ENCODE measurements at regions of chr2 and their contacts with region 1.

Region 1: DNA sequence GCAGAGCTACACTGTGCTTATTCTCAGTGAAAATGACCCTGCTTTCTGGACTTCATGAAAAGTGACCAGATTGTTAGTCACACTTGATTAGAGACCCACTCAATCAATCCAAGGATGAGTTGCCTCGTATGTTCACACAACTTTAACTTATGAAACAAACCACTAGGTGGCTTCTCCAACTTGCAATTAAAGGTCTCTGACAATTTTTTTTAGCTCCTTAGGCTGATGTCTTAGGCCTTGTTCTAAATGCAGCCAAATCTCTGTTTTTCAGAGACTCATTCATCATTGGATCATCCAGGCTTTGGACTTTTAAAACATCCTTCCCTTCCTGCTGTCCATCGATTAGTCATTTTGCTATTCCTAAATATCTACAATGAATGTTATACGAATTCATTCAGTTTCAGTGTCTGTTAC is 63.4 kb downstream of the MREG start:
- DNase-seq: no peak
- H3K4me3 Mint-ChIP-seq: no peak overlapping the region
- H3K27ac Mint-ChIP-seq: no peak overlapping the region
- H3K4me1 Mint-ChIP-seq: no peaks in the 10 kb centered on the region
- H3K27me3 Mint-ChIP-seq: peaks cover 2% of the 10 kb centered on the region

Region 2: DNA sequence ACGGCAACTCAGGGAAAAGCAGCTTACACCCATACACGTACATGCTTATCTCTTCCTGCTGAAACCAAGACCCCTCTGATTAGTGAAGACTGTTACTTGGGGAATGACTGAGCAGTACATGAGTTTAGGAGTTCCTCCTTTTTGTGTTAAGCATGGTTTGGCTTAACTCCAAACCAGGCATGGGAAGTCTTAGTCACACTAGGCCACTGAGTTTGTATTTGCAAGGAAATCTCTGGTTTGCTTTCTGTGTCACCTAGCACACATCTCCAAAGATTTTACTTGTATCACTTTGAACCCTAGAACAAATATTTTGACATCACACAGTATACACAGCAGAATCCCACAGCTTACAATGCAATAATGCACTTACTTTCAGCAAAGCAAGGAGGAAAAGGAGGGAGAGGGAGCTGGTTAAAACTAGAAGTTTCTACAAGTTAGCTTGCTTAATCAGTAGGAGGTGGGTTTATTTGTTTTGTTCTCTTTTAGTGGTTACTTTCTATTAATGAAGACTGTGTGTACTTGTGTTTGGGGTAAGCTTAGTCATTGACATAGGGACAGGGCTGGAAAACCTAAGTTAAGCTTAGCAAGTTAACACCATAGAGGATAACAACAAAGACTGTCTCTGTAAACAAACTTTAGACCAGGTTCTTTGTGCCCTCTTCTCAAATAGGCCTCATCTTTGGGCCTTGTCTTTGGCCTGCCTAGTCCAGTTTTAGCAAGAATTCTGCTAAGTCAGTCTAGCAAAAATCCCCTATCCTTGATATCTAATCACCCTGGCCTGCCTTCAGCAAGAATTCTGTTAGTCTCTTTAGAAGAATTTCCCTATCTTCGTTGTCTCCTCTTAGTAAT is 156.0 kb before region 1 on chr2:
- intact Hi-C with region 1: no loop called
- DNase-seq: no peak
- H3K4me3 Mint-ChIP-seq: no peak overlapping the region
- H3K27ac Mint-ChIP-seq: no peak overlapping the region
- H3K4me1 Mint-ChIP-seq: peaks cover 6% of the 10 kb centered on the region
- H3K27me3 Mint-ChIP-seq: no peaks in the 10 kb centered on the region

Region 3: GRCh38 chr2:216023055-216023648 is 73.2 kb after region 1 on chr2:
- intact Hi-C with region 1: loop called (anchors 1 kb)
- DNase-seq: peak; percentile 30
- H3K4me3 Mint-ChIP-seq: no peak overlapping the region
- H3K27ac Mint-ChIP-seq: no peak overlapping the region
- H3K4me1 Mint-ChIP-seq: peaks cover 8% of the 10 kb centered on the region
- H3K27me3 Mint-ChIP-seq: no peaks in the 10 kb centered on the region

Measured in activated T-helper 1 cell treated with anti-CD3 and anti-CD28 coated beads, Interleukin-12 subunit alpha, Interleukin-12 subunit beta, Interleukin-2, Interleukin-4 antibody, amounts not matched to agents 30 ng/mL and 10 ng/mL and 1 ng/mL, durations not matched to agents 14 hours and 24 hours and 36 hours (primary cell).